Esophagus muscularis mucosa (tissue), 4 donors: ENCODE measurements at regions of chr15 and their contacts with region 1.

Region 1: DNA sequence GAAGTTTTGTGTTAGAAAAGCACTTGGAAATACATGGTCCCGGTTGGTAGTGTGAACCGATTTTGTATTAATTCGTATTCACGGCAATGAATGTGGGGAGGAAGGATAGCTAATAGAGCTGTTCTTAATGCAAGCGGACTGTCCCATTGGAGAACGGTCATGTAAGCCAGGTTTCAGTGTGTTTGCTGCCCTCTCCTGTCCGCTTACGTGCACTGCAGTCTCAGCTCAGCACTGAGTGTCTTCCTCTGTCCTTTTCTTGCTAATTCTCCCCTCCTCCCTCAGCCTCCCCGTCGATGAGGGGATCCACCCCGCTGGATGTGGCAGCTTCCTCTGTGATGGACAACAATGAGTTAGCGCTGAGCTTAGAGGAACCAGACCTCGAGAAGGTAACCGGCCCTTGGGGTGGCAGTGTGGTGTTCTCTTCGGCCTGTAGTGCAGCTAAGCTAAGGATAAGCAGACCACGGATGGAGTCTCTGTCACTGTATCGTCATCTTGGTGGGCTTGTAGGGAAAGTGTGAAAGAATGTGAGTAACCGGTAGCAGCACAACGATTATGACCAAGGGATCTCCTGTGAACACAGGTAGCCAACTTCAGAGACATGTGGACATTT is 267.5 kb upstream of the CHRM5 start:
- DNase-seq: no peak
- H3K4me3 ChIP-seq: no peak overlapping the region
- H3K27ac ChIP-seq: no peak overlapping the region
- H3K4me1 ChIP-seq: peaks cover 0 to 6% (median 3%) of the 10 kb centered on the region in 4 donors
- H3K27me3 ChIP-seq: no peaks in the 10 kb centered on the region
- CTCF ChIP-seq: peak; percentile 81 to 95 (median 83)
- EP300 ChIP-seq: no peak
- POLR2A ChIP-seq: no peak

Region 2: GRCh38 chr15:33086507-33087121 is 614.2 kb before region 1 on chr15:
- intact Hi-C with region 1: loop called (anchors 2 kb)
- DNase-seq: no peak
- H3K4me3 ChIP-seq: no peak overlapping the region
- H3K27ac ChIP-seq: no peak overlapping the region
- H3K4me1 ChIP-seq: peaks cover 0 to 19% (median 16%) of the 10 kb centered on the region in 4 donors
- H3K27me3 ChIP-seq: no peaks in the 10 kb centered on the region
- CTCF ChIP-seq: peak; percentile 47 to 58 (median 55)
- EP300 ChIP-seq: no peak
- POLR2A ChIP-seq: no peak

Region 3: DNA sequence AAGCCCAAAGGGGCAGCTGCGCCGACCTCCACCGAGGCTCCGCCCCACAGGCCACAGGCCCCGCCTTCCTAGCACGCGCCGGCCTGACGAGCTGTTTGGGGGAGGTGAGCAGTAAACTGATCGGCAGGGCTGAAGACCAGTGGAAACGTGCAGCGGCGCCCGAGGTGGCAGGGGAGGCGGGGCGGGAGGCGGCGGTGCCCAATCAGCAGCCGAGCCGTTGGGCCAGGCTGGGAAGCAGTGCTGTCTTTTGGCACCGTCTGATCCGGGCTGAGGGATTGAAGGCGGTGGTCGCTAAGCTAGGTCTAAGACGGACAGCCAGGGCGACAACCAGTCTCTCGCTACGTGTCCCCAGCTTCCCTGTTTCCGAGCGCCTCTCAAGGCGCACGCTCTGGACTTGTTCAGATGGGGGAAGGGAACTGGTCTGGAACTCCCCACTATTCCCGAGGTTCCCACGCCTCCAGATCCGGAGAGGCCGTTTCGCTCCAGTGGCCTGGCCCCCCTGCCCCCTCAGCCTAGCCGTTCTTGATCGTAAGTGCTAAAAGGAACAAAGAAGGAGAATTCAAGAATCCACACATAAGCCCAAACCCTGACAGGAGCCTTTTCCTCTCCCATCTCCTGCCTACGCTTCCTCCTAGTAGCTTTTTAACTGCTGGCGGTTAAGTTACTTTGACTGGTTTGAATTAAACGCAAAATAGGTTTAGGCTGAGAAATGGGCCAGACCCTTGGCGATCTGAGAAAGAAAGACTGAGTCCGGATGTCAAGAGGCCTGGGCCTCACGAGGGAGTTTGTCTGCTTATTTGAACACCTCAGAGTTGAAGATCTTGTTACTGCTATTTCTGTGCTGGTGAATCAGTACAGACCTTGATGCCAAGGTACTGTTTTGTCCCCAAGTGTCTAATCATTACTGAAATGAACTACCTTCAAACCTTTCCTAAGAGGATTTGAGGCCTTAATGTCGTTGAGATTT is 505.8 kb before region 1 on chr15 and contains the start of gene FMN1:
- intact Hi-C with region 1: no loop called
- DNase-seq: peak; percentile 97
- H3K4me3 ChIP-seq: peak within 1 kb of the TSS; percentile 57 to 72 (median 62)
- H3K27ac ChIP-seq: peak within 1 kb of the TSS; percentile 72 to 79 (median 74)
- H3K4me1 ChIP-seq: peaks cover 0 to 16% (median 12%) of the 10 kb centered on the region in 4 donors
- H3K27me3 ChIP-seq: no peaks in the 10 kb centered on the region
- CTCF ChIP-seq: no peak
- EP300 ChIP-seq: no peak
- POLR2A ChIP-seq: no peak
- total RNA-seq, gene FMN1: 4.8 to 12.5 (median 8.6) TPM

Region 4: DNA sequence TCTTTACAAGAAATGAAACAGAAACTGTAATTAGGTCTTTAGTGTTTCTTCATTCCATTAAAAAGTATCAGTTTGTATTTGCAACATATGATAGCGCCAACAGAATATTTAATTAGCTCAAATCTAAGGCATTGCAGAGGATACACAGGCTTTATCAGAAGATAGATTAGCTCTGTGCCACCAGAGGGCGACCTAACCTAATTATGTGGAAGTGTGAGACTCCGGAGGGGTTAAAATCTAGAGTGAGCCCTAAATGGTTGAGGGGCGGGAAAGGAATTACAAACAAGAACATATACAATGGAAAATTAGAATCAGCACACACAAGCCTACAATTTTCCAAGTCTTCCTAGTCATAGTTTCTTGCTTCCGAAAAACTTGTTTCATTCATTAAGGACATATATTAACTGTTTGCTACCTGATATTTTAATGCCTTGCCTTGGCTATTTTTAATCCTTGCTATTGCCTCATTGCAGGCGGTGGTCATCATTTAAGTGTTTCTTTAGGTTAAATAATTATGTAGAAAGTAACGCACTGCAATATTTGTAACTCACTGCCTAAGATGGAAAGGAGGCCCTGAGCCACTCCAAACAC is 408.0 kb before region 1 on chr15:
- intact Hi-C with region 1: loop called (anchors 5 kb)
- DNase-seq: peak; percentile 82
- H3K4me3 ChIP-seq: no peak overlapping the region
- H3K27ac ChIP-seq: no peak overlapping the region
- H3K4me1 ChIP-seq: peaks cover 0 to 6% (median 3%) of the 10 kb centered on the region in 4 donors
- H3K27me3 ChIP-seq: no peaks in the 10 kb centered on the region
- CTCF ChIP-seq: peak; percentile 60 to 63 (median 63)
- EP300 ChIP-seq: no peak
- POLR2A ChIP-seq: no peak

Region 5: GRCh38 chr15:33810806-33811205 is 110.0 kb after region 1 on chr15:
- intact Hi-C with region 1: no loop called
- DNase-seq: no peak
- H3K4me3 ChIP-seq: no peak overlapping the region
- H3K27ac ChIP-seq: no peak overlapping the region
- H3K4me1 ChIP-seq: no peaks in the 10 kb centered on the region
- H3K27me3 ChIP-seq: no peaks in the 10 kb centered on the region
- CTCF ChIP-seq: no peak
- EP300 ChIP-seq: no peak
- POLR2A ChIP-seq: no peak

Region 6: GRCh38 chr15:33852557-33852956 is 151.8 kb after region 1 on chr15:
- intact Hi-C with region 1: no loop called
- DNase-seq: no peak
- H3K4me3 ChIP-seq: no peak overlapping the region
- H3K27ac ChIP-seq: no peak overlapping the region
- H3K4me1 ChIP-seq: no peaks in the 10 kb centered on the region
- H3K27me3 ChIP-seq: no peaks in the 10 kb centered on the region
- CTCF ChIP-seq: no peak
- EP300 ChIP-seq: no peak
- POLR2A ChIP-seq: no peak